Activated T-helper 1 cell treated with anti-CD3 and anti-CD28 coated beads, Interleukin-12 subunit alpha, Interleukin-12 subunit beta, Interleukin-2, Interleukin-4 antibody, amounts not matched to agents 30 ng/mL and 10 ng/mL and 1 ng/mL, durations not matched to agents 14 hours and 24 hours and 36 hours (primary cell): ENCODE measurements at regions of chr10 and their contacts with region 1.

Region 1: GRCh38 chr10:73785221-73785720 is at the start of gene ZSWIM8:
- DNase-seq: peak; percentile 79
- H3K4me3 Mint-ChIP-seq: peak within 1 kb of the TSS; percentile 99
- H3K27ac Mint-ChIP-seq: peak within 1 kb of the TSS; percentile 87
- H3K4me1 Mint-ChIP-seq: peaks cover 48% of the 10 kb centered on the region
- H3K27me3 Mint-ChIP-seq: no peaks in the 10 kb centered on the region
- total RNA-seq, gene ZSWIM8: 54.2 and 56.3 TPM in 2 replicates

Region 2: DNA sequence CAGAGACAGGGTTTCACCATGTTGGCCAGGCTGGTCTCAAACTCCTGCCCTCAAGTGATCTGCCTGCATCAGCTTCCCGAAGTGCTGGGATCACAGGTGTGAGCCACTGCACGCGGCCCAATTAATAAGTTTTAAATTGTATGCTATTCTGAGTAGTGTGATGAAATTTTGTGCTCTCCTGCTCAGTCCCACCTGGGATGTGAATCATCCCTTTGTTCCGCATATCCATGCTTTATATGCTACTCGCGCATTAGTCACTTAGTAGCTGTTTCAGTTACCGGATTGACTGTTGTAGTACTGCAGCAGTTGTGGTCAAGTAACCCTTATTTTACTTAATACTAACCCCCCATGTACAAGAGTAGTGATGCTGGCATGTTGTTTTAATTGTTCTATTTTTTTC is 939.0 kb before region 1 on chr10:
- intact Hi-C with region 1: no loop called
- DNase-seq: no peak
- H3K4me3 Mint-ChIP-seq: no peak overlapping the region
- H3K27ac Mint-ChIP-seq: no peak overlapping the region
- H3K4me1 Mint-ChIP-seq: no peaks in the 10 kb centered on the region
- H3K27me3 Mint-ChIP-seq: no peaks in the 10 kb centered on the region

Region 3: DNA sequence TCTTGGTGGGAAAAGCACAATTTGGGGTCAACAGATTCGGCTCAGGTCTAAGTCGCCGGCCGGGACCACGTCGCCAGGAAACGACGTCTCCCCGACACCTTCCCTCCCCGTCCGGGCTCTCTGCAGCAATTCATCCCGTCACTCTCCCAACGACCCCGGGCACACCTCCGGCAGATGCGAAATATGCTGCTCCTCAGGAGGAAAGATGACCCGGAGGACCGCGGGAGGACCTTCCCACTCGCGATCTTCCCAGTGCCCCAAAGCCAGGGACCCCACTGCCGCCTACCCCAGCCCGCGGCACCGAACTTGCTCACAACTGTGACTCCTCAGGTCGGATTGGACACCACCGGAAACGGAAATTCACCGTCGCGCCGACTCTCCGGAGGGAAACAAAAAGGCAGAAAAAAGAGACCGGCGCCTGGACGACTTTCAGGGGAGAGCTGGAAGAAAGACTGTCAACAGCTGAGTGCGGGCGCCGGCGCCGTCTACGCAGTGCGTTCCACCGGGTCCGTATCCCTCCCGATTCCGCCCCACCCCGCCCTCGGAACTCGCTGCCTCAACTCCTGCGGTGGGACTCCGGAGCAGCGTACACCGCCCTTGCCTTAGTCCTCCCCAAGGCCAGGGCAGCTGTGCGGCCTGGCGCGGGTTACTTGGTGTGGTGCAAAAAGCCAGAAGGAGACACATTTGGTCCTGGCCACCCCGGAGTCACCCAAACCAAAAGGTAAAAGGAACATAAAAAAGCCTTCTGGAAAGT is 54.9 kb before region 1 on chr10:
- intact Hi-C with region 1: loop called (anchors 1 kb)
- DNase-seq: peak; percentile 92
- H3K4me3 Mint-ChIP-seq: peak overlapping the region; percentile 95
- H3K27ac Mint-ChIP-seq: peak overlapping the region; percentile 97
- H3K4me1 Mint-ChIP-seq: peaks cover 10% of the 10 kb centered on the region
- H3K27me3 Mint-ChIP-seq: peaks cover 2% of the 10 kb centered on the region

Region 4: DNA sequence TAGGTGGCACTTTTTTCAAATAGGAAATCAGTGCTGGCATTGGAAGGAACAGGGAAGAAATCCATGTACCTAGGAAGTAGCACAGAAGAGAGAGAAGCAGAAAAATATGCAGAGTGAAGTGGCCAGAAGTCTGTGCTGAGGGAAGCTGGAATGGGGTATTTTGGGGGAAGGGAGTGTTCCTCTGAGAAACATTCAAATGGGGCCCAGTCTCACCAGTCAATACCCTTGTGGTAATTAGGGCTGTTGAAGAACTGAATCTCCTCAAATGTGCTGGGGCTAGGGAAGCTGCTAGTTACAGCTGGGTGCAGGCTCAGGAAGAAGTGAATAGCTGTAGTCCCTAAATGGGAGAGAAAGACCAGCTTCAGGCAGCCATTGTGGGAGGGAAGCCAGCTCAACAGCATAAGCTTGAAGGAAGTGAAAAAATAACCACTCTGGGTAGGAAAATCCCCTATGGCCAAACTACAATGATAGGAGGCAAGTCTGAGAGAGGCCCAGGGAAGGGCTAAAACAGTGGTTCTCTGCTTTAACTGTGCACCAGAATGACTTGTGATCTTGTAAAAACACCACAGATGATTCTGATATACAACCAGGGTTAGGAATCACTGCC is 18.5 kb after region 1 on chr10:
- intact Hi-C with region 1: loop called (anchors 1 kb)
- DNase-seq: peak; percentile 6
- H3K4me3 Mint-ChIP-seq: peak overlapping the region; percentile 58
- H3K27ac Mint-ChIP-seq: peak overlapping the region; percentile 89
- H3K4me1 Mint-ChIP-seq: peaks cover 43% of the 10 kb centered on the region
- H3K27me3 Mint-ChIP-seq: no peaks in the 10 kb centered on the region

Region 5: DNA sequence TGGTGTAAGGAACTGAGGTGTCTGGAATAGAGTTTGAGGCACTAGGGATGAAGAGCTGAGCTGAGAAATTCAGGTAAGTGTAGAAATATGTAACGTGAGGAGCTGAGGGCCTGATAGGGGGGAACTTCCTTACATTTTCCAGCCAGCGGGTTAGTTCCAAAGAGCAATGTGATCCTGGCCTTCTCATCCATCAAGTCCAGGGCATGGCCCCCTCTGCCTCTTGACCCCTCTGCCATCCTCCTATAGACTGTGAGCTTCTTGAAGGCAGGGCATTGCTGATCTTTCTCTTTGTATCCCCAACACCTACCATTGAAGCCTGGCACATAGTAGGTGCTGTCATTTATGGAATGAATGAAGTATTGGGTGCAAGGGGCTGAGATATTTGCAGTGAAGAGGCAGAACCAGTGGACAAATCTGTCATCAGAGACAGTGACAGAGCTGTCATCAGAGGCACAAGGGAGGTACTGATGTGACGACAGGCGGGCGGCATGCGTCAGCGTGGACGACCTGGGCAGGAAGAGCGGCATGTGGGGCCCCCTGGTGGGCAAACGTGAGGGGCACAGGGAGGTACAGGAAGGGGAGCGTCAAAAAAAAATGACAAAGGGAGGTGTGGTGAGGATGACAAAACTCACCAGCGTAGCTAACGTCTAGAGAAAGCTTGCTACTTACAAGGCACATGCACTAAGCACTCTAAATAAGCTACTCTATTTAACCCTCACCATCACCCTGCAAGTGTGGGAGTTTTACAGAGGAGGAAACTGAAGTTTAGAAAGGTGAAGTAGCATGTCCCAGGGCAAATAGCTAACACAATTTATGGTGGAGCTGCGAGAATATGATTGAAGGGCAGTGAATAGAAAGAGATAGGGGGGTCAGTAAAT is 94.3 kb after region 1 on chr10:
- intact Hi-C with region 1: loop called (anchors 1 kb)
- DNase-seq: peak; percentile 90
- H3K4me3 Mint-ChIP-seq: no peak overlapping the region
- H3K27ac Mint-ChIP-seq: peak overlapping the region; percentile 53
- H3K4me1 Mint-ChIP-seq: peaks cover 53% of the 10 kb centered on the region
- H3K27me3 Mint-ChIP-seq: peaks cover 16% of the 10 kb centered on the region